H1 (cell line): ENCODE measurements at regions of chr15 and their contacts with region 1.

Region 1: GRCh38 chr15:82139823-82140268 is 94.0 kb upstream of the MEX3B start:
- DNase-seq: no peak
- H3K4me3 ChIP-seq: no peak overlapping the region
- H3K27ac ChIP-seq: no peak overlapping the region; the same call in 1 of the 2 replicates
- H3K4me1 ChIP-seq: no peaks in the 10 kb centered on the region
- H3K27me3 ChIP-seq: no peaks in the 10 kb centered on the region
- CTCF ChIP-seq: peak in 2 of 3 experiments; percentile 55 to 58; a peak in 2 of 4 replicates
- EP300 ChIP-seq: no peak
- POLR2A ChIP-seq: no peak
- RAD21 ChIP-seq: peak; percentile 38 to 50; a peak in 3 of 4 replicates

Region 2: DNA sequence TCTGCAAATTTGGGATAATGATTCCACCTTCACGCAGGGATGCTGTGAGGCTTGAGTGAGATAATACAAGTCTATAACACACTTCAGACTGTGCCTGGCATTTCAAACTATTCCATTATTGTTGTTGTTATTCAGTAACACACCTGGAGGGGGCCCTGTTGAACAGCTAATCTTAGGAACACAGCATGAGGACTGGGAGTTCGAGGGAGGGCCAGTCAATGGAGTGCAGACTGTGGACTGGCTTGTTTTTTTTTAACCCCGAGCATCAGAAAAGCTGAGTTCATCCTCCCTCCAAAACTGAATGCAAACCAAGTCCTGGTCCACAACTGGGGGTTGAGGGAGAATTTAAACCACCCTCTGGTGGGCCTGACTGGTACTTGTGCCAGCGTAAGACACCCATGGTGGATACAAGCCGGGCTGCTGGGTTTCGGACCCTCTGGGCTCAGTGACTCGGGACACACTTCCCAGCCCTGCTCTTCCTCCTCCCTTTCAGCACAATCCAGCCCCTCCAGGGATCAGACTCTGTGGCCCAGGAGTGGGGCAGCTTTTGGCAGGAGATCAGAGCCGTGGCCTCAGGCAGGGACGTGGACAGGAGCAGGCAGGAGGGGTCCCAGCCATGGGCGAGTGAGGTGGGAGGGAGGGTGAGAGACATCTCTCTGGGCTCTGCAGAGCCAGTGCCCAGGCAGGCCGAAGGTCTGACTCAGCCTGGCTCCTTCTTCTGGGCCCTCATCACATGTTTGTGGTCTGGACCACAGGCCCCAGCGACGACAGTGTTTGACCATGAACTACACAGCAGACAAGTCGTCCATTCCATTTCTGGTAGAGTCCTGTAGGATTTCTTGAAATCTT is 57.7 kb before region 1 on chr15:
- CTCF ChIA-PET with region 1: interaction called, 12 read pairs
- POLR2A ChIA-PET with region 1: no interaction called
- DNase-seq: peak in 1 of 2 experiments; percentile 67
- H3K4me3 ChIP-seq: no peak overlapping the region
- H3K27ac ChIP-seq: no peak overlapping the region
- H3K4me1 ChIP-seq: peaks cover 0 to 2% (median 0%) of the 10 kb centered on the region in 4 experiments; a peak in 1 of 7 replicates
- H3K27me3 ChIP-seq: no peaks in the 10 kb centered on the region
- CTCF ChIP-seq: peak in 2 of 3 experiments; percentile 66 to 74; a peak in 3 of 4 replicates
- EP300 ChIP-seq: no peak
- POLR2A ChIP-seq: no peak
- RAD21 ChIP-seq: peak; percentile 80 to 87

Region 3: DNA sequence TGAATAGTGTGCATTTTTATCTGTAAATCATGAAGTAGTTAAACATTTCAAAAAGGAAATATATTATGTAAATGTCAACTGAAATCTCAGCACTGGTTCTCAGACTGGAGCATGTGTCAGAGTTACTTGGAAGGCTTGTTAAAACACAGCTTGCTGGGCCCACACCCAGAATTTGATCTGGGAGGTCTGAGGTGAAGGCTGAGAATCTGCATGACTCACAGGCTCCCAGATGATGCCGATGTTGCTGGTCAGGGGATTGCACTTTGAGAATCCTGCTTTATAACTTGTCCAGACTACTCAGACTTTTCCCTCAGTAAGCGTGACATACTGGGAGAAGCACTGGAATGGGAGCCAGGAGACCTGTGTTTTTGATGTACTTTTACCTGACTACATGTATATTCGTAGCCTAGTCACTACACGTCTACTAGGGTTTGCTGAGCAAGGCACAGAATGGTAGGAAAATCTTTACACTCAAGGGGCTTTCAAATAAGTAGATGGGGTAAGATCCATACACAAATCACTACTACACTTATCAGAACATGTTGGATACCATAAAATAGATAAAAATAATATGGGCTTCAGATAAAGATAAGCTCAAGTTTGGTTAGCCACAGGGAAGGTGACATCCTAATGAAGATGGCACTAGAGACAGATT is 17.0 kb before region 1 on chr15:
- CTCF ChIA-PET with region 1: interaction called, 38 read pairs
- POLR2A ChIA-PET with region 1: no interaction called
- DNase-seq: peak in 1 of 2 experiments; percentile 19
- H3K4me3 ChIP-seq: no peak overlapping the region
- H3K27ac ChIP-seq: no peak overlapping the region
- H3K4me1 ChIP-seq: no peaks in the 10 kb centered on the region
- H3K27me3 ChIP-seq: no peaks in the 10 kb centered on the region
- CTCF ChIP-seq: no peak
- EP300 ChIP-seq: no peak
- POLR2A ChIP-seq: no peak
- RAD21 ChIP-seq: no peak

Region 4: GRCh38 chr15:82129761-82130160 is 10.1 kb before region 1 on chr15:
- CTCF ChIA-PET with region 1: interaction called, 38 read pairs
- POLR2A ChIA-PET with region 1: interaction called, 5 read pairs
- DNase-seq: no peak
- H3K4me3 ChIP-seq: no peak overlapping the region
- H3K27ac ChIP-seq: no peak overlapping the region
- H3K4me1 ChIP-seq: no peaks in the 10 kb centered on the region
- H3K27me3 ChIP-seq: no peaks in the 10 kb centered on the region
- CTCF ChIP-seq: no peak
- EP300 ChIP-seq: no peak
- POLR2A ChIP-seq: no peak
- RAD21 ChIP-seq: no peak

Region 5: GRCh38 chr15:82159922-82160321 is 20.1 kb after region 1 on chr15:
- CTCF ChIA-PET with region 1: interaction called, 10 read pairs
- POLR2A ChIA-PET with region 1: no interaction called
- DNase-seq: no peak
- H3K4me3 ChIP-seq: no peak overlapping the region
- H3K27ac ChIP-seq: peak overlapping the region; percentile 29; the same call in 1 of the 2 replicates
- H3K4me1 ChIP-seq: no peaks in the 10 kb centered on the region
- H3K27me3 ChIP-seq: no peaks in the 10 kb centered on the region
- CTCF ChIP-seq: no peak
- EP300 ChIP-seq: no peak
- POLR2A ChIP-seq: no peak
- RAD21 ChIP-seq: no peak

Region 6: DNA sequence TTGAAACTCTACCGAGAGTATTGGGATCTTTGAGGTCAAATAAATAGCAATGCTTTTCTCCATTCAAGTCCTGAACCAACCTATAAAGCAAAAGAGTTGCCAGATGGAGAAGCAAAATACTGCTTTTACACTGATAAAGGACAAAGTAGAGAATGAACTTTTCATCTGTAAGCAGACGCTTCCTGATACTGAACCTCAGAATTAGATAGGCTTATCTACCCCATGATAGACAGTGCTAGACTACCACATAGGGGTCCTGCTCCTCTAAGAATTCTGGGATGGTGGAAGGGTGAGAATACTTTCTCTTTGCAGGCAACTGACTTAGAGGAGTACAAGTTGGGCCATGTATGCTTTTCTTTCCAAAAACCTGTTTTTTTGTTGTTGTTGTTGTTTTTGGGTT is 132.3 kb after region 1 on chr15:
- CTCF ChIA-PET with region 1: no interaction called
- POLR2A ChIA-PET with region 1: no interaction called
- DNase-seq: no peak
- H3K4me3 ChIP-seq: no peak overlapping the region
- H3K27ac ChIP-seq: no peak overlapping the region
- H3K4me1 ChIP-seq: peaks cover 0 to 11% (median 6%) of the 10 kb centered on the region in 4 experiments; a peak in 5 of 7 replicates
- H3K27me3 ChIP-seq: no peaks in the 10 kb centered on the region
- CTCF ChIP-seq: no peak
- EP300 ChIP-seq: no peak
- POLR2A ChIP-seq: no peak
- RAD21 ChIP-seq: no peak